Ascending aorta (tissue), 2 donors: ENCODE measurements at regions of chr12 and their contacts with region 1.

Region 1: DNA sequence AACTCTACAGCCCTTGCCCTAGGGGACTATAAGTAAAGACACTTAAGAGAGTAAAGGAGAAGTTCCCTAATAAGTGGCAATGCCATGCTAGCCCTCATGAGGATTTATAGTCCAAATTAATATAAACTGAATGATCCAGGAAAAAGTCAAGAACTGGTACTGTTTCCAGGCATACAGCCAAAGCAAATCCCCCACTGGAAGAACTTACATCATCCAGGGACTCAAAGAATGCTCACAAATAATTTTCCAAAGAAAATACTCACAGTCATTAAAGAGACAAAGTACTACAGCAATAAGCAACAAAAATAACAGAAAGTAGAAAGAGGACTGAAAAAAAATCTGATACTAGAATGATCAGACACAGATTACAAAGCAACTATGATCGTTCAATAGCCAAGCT is 79.7 kb upstream of the RAP1B start:
- DNase-seq: peak in 1 of 2 donors; percentile 74
- H3K4me3 ChIP-seq: peak overlapping the region in 1 of 2 donors; percentile 2
- H3K27ac ChIP-seq: peak overlapping the region; percentile 22 to 68
- H3K4me1 ChIP-seq: peaks cover 6 to 28% of the 10 kb centered on the region in 2 donors
- H3K27me3 ChIP-seq: no peaks in the 10 kb centered on the region
- CTCF ChIP-seq: no peak

Region 2: DNA sequence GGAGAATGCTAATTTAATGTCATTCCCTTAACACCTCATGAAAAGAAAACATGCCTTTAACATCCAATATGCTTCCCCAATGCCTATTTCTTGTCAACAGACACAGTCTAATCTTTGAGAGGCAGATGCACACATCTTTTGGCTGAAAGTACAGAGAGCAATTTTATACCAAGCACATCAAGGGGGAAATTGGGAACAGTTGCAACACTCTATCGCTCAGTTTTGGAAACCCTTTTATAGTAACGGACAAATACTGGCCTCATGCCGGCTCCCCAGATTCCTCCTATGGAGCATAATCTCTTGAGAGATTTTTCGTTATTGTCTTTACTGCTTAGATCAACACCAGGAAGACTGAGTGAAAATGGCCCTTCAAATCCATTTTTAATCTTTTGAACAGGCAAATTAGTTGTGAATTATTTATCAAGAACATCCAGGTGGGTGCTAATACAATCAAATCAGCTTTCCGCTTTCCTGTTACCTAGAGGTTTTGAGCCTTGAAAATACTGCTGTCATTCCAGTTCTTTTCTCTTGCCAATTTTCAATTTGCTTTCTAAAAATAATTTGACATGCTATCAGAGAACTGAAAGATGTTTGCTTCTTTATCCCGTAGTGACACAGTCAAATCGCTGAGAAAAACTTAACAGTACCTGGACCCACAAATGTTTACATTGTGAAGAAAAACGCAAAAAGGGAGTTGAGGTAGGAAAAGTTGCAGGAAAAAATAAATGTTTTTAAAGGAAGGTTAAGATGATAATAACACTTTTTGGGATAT is 1322.5 kb before region 1 on chr12:
- intact Hi-C with region 1: no loop called
- DNase-seq: no peak
- H3K4me3 ChIP-seq: no peak overlapping the region
- H3K27ac ChIP-seq: no peak overlapping the region
- H3K4me1 ChIP-seq: no peaks in the 10 kb centered on the region
- H3K27me3 ChIP-seq: no peaks in the 10 kb centered on the region
- CTCF ChIP-seq: no peak

Region 3: DNA sequence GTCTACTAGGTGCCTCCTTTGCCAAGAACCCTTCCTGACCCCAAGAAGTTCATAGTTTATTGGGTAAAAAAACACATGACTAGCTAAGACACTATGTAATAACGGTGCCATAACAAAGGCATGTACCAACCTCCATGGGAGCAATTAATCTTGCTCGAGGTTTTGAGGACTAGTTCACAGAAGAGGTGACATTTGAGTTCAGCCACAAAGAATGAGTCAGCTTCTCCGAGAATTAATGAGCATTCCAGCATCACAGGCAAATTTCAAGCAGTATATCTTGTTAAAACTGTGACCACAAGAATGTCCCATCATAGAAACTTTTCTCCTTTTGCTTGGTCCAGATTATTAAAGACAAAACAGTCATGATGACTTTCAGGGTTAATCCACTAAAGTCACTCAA is 33.3 kb before region 1 on chr12:
- intact Hi-C with region 1: loop called (anchors 2 kb)
- DNase-seq: peak in 1 of 2 donors; percentile 66
- H3K4me3 ChIP-seq: no peak overlapping the region
- H3K27ac ChIP-seq: peak overlapping the region; percentile 43 to 65
- H3K4me1 ChIP-seq: peaks cover 0 to 13% of the 10 kb centered on the region in 2 donors
- H3K27me3 ChIP-seq: no peaks in the 10 kb centered on the region
- CTCF ChIP-seq: no peak